Psoas muscle (tissue), 8 donors: ENCODE measurements at regions of chr1 and their contacts with region 1.

Region 1: GRCh38 chr1:212035123-212035834 is at the starts of genes DTL and INTS7:
- DNase-seq: peak; percentile 99 to 100
- ATAC-seq: peak; percentile 98 to 99 (median 98)
- H3K4me3 ChIP-seq: peak within 1 kb of the TSS; percentile 67
- H3K27ac ChIP-seq: peak within 1 kb of the TSS; percentile 85
- H3K4me1 ChIP-seq: peaks cover 7% of the 10 kb centered on the region
- H3K27me3 ChIP-seq: no peaks in the 10 kb centered on the region
- CTCF ChIP-seq: peak; percentile 93
- total RNA-seq, gene DTL: 0.12 to 0.40 (median 0.17) TPM
- total RNA-seq, gene INTS7: 6.2 to 8.1 (median 7.5) TPM

Region 2: DNA sequence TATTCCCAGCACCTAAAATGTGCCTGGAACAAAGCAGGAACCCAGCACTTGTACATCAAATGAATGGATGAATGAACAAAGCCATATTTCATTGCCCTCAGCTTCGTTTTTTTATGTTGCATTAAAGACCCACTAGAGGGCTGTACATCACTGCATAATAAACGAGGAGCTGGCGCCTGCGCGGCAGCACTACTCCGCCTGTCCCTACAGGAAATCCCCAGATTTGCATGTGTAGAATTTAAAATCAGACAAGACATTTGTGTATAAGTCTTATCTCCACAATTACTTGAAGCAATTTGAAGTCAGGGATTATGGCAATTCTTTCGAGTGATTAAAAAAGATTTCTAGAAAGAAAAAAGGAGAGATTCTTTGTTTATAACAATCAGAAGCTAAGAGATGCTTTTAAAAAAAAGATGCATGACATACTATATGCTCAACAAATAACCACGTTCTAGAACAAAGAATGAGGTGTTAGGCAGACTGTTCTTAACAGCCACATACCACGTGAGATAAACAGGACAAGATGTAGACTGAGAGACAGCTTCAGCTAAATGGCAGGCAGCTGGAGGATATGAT is 354.4 kb before region 1 on chr1:
- intact Hi-C with region 1: loop called in 1 of 2 experiments (anchors 5 kb)
- DNase-seq: peak; percentile 59 to 81
- ATAC-seq: peak; percentile 84 to 97 (median 92)
- H3K4me3 ChIP-seq: no peak overlapping the region
- H3K27ac ChIP-seq: no peak overlapping the region
- H3K4me1 ChIP-seq: no peaks in the 10 kb centered on the region
- H3K27me3 ChIP-seq: no peaks in the 10 kb centered on the region
- CTCF ChIP-seq: peak; percentile 73

Region 3: GRCh38 chr1:212196355-212196754 is 161.1 kb after region 1 on chr1:
- intact Hi-C with region 1: no loop called
- DNase-seq: no peak
- ATAC-seq: no peak
- H3K4me3 ChIP-seq: no peak overlapping the region
- H3K27ac ChIP-seq: no peak overlapping the region
- H3K4me1 ChIP-seq: no peaks in the 10 kb centered on the region
- H3K27me3 ChIP-seq: no peaks in the 10 kb centered on the region
- CTCF ChIP-seq: no peak

Region 4: GRCh38 chr1:212386029-212386428 is 350.8 kb after region 1 on chr1:
- intact Hi-C with region 1: no loop called
- DNase-seq: no peak
- ATAC-seq: peak in 3 of 4 donors; percentile 41 to 74 (median 74)
- H3K4me3 ChIP-seq: no peak overlapping the region
- H3K27ac ChIP-seq: no peak overlapping the region
- H3K4me1 ChIP-seq: no peaks in the 10 kb centered on the region
- H3K27me3 ChIP-seq: no peaks in the 10 kb centered on the region
- CTCF ChIP-seq: no peak

Region 5: GRCh38 chr1:212432706-212433576 is 397.7 kb after region 1 on chr1 and contains the start of gene NENF:
- intact Hi-C with region 1: loop called in 1 of 2 experiments (anchors 10 kb)
- DNase-seq: peak; percentile 89 to 90
- ATAC-seq: peak; percentile 96 to 98 (median 98)
- H3K4me3 ChIP-seq: peak within 1 kb of the TSS; percentile 90
- H3K27ac ChIP-seq: peak within 1 kb of the TSS; percentile 79
- H3K4me1 ChIP-seq: peaks cover 11% of the 10 kb centered on the region
- H3K27me3 ChIP-seq: no peaks in the 10 kb centered on the region
- CTCF ChIP-seq: no peak
- total RNA-seq, gene NENF: 60.6 to 74.9 (median 66.7) TPM